OCI-LY7 (cell line): ENCODE measurements at regions of chr9 and their contacts with region 1.

Region 1: DNA sequence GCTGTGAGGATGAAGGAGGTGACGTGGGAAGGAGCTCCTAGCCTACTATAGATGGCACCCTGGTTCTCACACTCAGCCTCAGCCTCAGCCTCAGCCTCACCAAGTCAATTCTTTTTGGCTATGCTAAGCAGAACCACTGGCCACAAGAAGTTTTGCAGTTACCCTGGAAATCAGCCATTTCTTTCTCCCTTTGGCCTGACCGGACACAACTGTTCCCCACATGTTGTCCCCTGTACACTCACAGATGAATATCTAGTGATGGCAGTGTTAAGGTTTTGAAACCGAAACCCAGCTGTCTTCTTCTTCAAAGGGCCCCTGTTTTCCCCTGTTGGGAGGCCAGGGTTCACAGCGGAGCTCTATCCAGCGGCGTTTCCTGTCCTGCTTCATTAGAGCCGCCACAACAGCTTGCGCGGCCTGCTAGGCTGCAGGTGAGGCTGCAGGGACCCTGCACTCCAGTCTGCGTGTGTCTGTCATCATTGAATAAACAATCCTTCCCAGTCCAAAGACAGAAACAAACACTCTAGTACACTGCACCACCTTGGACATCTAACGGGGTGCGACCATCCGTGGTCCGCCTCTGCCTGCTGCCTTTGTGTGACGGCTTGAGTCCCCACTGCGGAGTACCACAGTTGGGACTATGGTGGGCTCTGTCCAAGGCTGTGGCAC is 250.5 kb downstream of the DENND1A start:
- DNase-seq: peak; percentile 96
- H3K4me3 ChIP-seq: peak overlapping the region; percentile 50
- H3K27ac ChIP-seq: peak overlapping the region; percentile 92
- H3K4me1 ChIP-seq: peaks cover 63% of the 10 kb centered on the region
- CTCF ChIP-seq: no peak

Region 2: DNA sequence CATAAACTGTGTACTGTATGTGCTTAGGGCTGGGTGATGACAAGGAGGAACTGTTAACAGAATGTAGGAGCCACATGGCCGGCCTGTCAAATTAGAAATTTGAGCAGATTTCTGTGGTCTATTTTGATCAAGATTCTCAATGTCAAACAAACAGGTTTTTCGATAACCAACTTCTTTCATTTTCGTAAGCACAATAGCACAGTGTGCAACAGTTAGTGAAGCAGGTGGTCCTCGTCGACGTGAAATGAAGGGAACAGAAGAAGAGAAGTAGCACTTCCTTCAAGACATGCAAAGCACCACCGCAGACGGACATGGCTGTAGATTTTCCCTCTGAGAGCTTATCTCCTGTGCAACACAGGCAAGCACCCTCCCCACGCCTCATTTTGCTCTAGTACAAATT is 71.4 kb before region 1 on chr9:
- CTCF ChIA-PET with region 1: no interaction called
- POLR2A ChIA-PET with region 1: no interaction called
- intact Hi-C with region 1: loop called (anchors 1 kb)
- DNase-seq: peak; percentile 91
- H3K4me3 ChIP-seq: peak overlapping the region; percentile 33
- H3K27ac ChIP-seq: peak overlapping the region; percentile 92
- H3K4me1 ChIP-seq: peaks cover 58% of the 10 kb centered on the region
- CTCF ChIP-seq: no peak

Region 3: GRCh38 chr9:123658792-123659191 is 20.7 kb before region 1 on chr9:
- CTCF ChIA-PET with region 1: interaction called, 4 read pairs
- POLR2A ChIA-PET with region 1: interaction called, 5 read pairs
- intact Hi-C with region 1: loop called (anchors 2 kb)
- DNase-seq: peak; percentile 86
- H3K4me3 ChIP-seq: peak overlapping the region; percentile 9
- H3K27ac ChIP-seq: peak overlapping the region; percentile 52
- H3K4me1 ChIP-seq: peaks cover 27% of the 10 kb centered on the region
- CTCF ChIP-seq: no peak

Region 4: GRCh38 chr9:123825342-123826060 is 146.0 kb after region 1 on chr9:
- CTCF ChIA-PET with region 1: no interaction called
- POLR2A ChIA-PET with region 1: no interaction called
- intact Hi-C with region 1: no loop called
- DNase-seq: no peak
- H3K4me3 ChIP-seq: no peak overlapping the region
- H3K27ac ChIP-seq: no peak overlapping the region
- H3K4me1 ChIP-seq: no peaks in the 10 kb centered on the region
- CTCF ChIP-seq: no peak

Region 5: DNA sequence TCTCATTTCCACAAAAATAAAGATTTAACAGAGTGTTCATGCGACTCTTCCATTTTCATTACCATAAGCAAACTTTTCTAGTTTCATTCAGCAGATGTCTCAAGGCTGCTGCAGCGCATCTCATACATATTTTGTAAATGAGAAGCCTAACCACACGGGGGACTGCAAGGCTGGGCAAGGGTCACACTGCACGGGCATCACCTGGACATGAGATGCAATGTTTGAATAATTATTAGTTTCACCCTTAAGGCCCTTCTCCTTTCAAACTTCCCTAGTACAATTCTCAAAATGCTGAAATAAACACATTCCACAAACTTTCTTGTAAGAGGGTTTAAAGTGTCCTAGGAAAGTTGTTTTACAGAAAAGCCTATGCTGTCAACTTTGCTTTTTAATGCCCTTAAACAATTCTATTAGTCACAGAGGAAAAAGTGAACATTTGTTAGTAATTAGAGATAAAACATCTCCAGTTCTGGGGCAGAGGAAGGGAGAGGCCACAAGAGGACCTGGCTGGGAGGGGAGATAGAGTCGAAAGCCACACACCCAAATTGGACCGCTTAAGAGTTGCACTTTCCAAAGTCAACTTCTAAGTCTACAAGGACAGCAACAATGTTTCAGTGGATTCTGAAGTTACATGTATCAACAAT is 249.2 kb after region 1 on chr9:
- CTCF ChIA-PET with region 1: no interaction called
- POLR2A ChIA-PET with region 1: no interaction called
- intact Hi-C with region 1: loop called (anchors 1 kb)
- DNase-seq: peak; percentile 42
- H3K4me3 ChIP-seq: peak overlapping the region; percentile 74
- H3K27ac ChIP-seq: peak overlapping the region; percentile 62
- H3K4me1 ChIP-seq: peaks cover 46% of the 10 kb centered on the region
- CTCF ChIP-seq: peak; percentile 45; the same call in 1 of the 2 replicates